Motor neuron (in vitro differentiated cells): ENCODE measurements at regions of chr5 and their contacts with region 1.

Region 1: GRCh38 chr5:140639148-140639979 is at the start of gene TMCO6:
- ATAC-seq: peak; percentile 87 to 98 (median 96)
- H3K4me3 ChIP-seq: peak within 1 kb of the TSS; percentile 42 to 75 (median 54)
- H3K27ac ChIP-seq: peak within 1 kb of the TSS; percentile 59 to 75
- H3K4me1 ChIP-seq: peaks cover 8 to 10% of the 10 kb centered on the region in 2 donors
- total RNA-seq, gene TMCO6: 7.9 to 25.6 (median 11.9) TPM

Region 2: GRCh38 chr5:140399979-140400729 is 239.2 kb before region 1 on chr5:
- in situ Hi-C with region 1: loop called in 1 of 9 experiments (anchors 25 kb)
- ATAC-seq: no peak
- H3K4me3 ChIP-seq: peak overlapping the region; percentile 69 to 96 (median 81)
- H3K27ac ChIP-seq: peak overlapping the region; percentile 86 to 93
- H3K4me1 ChIP-seq: peaks cover 11 to 13% of the 10 kb centered on the region in 2 donors

Region 3: GRCh38 chr5:140575309-140575708 is 64.1 kb before region 1 on chr5:
- in situ Hi-C with region 1: loop called in 1 of 9 experiments (anchors 10 kb)
- ATAC-seq: peak in 3 of 8 experiments; percentile 61 to 90 (median 90)
- H3K4me3 ChIP-seq: no peak overlapping the region
- H3K27ac ChIP-seq: no peak overlapping the region
- H3K4me1 ChIP-seq: no peaks in the 10 kb centered on the region

Region 4: DNA sequence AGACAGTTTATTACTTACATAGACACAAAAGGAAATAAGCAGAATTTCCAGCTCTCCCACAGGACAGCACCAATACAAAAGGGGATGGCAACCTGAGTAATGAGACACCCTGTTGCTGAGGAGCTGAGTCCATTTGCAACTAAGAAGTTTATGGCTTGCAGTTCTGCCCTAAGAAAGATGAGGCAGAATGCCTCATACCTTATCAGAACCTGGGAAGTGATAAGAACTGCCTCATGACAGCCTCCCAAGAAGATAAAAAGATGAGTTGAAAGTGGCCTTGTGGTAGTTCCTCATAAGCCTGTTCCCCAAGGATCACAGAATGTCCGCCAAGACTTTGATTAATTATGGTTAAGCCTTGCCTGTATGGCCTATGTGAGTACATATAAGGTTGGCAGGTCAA is 102.6 kb after region 1 on chr5:
- in situ Hi-C with region 1: no loop called
- ATAC-seq: no peak
- H3K4me3 ChIP-seq: no peak overlapping the region
- H3K27ac ChIP-seq: no peak overlapping the region
- H3K4me1 ChIP-seq: no peaks in the 10 kb centered on the region